ENCODE measurements at regions of chrX and their contacts with region 1.

Region 1: DNA sequence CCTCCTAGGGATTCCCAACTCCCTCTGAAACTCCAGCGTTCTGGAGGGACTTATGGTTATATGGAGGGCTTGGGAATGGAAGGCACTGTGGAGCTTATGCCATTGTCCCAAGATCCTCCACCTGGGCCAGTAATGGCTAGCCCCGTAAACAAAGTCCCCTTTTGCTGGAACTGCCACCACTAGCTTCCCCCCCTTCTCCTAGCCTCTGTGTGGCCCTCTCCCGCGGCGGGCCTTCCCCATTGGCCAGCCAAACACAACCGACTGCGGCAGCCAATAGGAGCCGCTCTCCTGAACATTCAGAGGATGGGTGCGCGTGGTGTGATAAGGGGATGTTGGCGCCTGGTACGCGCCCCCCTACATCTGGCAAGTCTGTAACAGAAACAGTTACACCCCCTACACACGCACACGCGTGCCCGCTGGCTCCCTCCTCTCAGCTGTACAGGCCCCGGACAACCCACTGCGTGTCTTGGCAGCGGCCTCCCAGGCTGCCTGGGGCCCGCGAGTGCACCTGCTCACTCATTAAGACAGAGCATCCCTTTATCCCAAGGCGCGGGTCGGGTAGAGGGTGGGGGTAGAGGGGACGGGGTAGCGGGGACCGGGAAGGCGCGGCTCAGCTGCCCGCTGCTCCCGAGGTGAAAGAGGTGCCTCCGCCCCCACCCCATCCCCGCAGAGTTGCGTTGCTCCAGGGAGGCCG is 863 bp upstream of the RAB33A start:
- DNase-seq: peak in 1 of 4 donors; percentile 83
- ATAC-seq: peak; percentile 41
- H3K4me3 ChIP-seq: peak overlapping the region; percentile 32 to 49
- H3K27ac ChIP-seq: peak overlapping the region in 1 of 2 donors; percentile 78
- H3K4me1 ChIP-seq: peaks cover 0 to 23% of the 10 kb centered on the region in 2 donors
- H3K27me3 ChIP-seq: peaks cover 0 to 5% of the 10 kb centered on the region in 2 donors
- CTCF ChIP-seq: no peak

Region 2: GRCh38 chrX:130079824-130080406 is 91.0 kb before region 1 on chrX:
- intact Hi-C with region 1: loop called in 1 of 2 experiments (anchors 10 kb)
- DNase-seq: peak in 2 of 4 donors; percentile 35 to 65
- ATAC-seq: peak; percentile 66
- H3K4me3 ChIP-seq: no peak overlapping the region
- H3K27ac ChIP-seq: no peak overlapping the region
- H3K4me1 ChIP-seq: peaks cover 0 to 38% of the 10 kb centered on the region in 2 donors
- H3K27me3 ChIP-seq: no peaks in the 10 kb centered on the region
- CTCF ChIP-seq: peak; percentile 59 to 74

Region 3: GRCh38 chrX:131032354-131033230 is 861.7 kb after region 1 on chrX:
- intact Hi-C with region 1: no loop called
- DNase-seq: no peak
- ATAC-seq: no peak
- H3K4me3 ChIP-seq: no peak overlapping the region
- H3K27ac ChIP-seq: no peak overlapping the region
- H3K4me1 ChIP-seq: no peaks in the 10 kb centered on the region
- H3K27me3 ChIP-seq: peaks cover 0 to 6% of the 10 kb centered on the region in 2 donors
- CTCF ChIP-seq: no peak

Measured in left lung (tissue), 14 donors.